ENCODE measurements at regions of chr17 and their contacts with region 1.

Region 1: GRCh38 chr17:28726226-28727130 is at the start of gene TLCD1:
- DNase-seq: peak; percentile 96
- H3K4me3 Mint-ChIP-seq: peak within 1 kb of the TSS; percentile 93
- H3K27ac Mint-ChIP-seq: peak within 1 kb of the TSS; percentile 98
- H3K4me1 Mint-ChIP-seq: peaks cover 47% of the 10 kb centered on the region
- H3K27me3 Mint-ChIP-seq: no peaks in the 10 kb centered on the region
- total RNA-seq, gene TLCD1: 9.1 to 9.5 TPM

Region 2: DNA sequence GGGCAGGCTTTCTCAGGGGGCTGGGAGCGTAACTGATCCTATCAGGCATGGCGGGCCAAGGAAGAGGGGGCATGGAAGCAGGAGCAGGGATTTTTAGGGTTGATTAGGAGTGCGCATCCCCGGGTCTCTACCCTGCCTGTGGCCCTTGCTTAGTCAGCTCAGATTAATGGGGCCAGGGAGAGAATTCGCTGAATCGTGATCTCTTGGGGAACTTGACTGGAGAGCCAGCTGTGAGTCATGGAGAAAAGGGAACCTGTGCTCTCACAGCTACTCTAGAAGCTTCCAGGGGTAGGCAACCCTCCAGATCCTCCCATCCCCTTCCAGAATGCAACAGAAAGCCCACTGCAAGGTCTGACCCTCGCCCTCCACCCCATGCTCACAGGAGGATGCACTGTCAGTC is 216.7 kb before region 1 on chr17:
- CTCF ChIA-PET with region 1: no interaction called
- POLR2A ChIA-PET with region 1: no interaction called
- intact Hi-C with region 1: no loop called
- DNase-seq: no peak
- H3K4me3 Mint-ChIP-seq: no peak overlapping the region
- H3K27ac Mint-ChIP-seq: no peak overlapping the region
- H3K4me1 Mint-ChIP-seq: no peaks in the 10 kb centered on the region
- H3K27me3 Mint-ChIP-seq: peaks cover 33% of the 10 kb centered on the region

Region 3: DNA sequence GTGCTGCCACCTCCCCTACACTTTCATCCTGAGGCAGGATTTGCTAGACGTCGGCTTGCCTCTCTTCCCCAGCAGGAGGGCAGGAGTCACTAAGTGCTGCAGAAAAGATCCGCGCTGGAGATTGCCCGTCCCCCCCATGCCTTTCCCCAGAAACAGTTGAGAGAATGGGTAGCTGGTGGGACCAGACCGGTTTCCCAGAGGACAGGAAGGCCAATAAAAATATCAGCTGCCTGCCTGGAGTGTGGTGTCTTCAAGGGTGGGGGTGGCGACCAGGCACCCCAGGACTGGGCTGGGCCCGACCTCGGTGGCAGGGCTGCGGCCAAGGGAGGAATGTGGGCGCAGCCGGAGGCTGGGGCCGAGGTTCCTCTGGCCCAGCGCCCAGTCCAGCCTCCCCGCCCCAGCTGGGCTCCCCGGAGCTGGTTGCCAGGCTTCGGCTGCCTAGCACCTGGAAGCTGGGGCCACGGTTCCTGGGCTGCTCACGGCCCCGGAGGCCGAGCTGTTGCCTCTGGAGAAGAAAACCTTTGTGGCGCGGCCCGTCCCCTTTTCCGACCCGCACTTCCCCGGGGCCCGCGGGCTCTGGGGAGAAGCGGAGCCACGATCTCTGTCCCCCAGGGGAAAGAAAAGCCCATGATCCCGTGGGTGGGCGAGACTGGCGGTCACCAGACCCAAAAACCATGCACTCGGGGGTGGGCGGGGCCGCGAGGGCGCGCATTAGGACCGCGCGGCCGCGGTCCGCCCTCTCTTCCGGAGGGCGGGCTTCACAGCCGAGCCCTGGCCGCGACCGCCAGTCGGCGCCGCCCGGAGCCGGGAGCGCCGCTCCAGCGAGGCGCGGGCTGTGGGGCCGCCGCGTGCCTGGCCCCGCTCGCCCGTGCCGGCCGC is 17.0 kb after region 1 on chr17 and contains the start of gene TRAF4:
- CTCF ChIA-PET with region 1: interaction called, 632 read pairs
- POLR2A ChIA-PET with region 1: interaction called, 202 read pairs
- intact Hi-C with region 1: loop called (anchors 1 kb)
- DNase-seq: peak; percentile 83
- H3K4me3 Mint-ChIP-seq: peak within 1 kb of the TSS; percentile 90
- H3K27ac Mint-ChIP-seq: peak within 1 kb of the TSS; percentile 89
- H3K4me1 Mint-ChIP-seq: peaks cover 32% of the 10 kb centered on the region
- H3K27me3 Mint-ChIP-seq: no peaks in the 10 kb centered on the region
- total RNA-seq, gene TRAF4: 83.0 to 83.9 TPM

Region 4: GRCh38 chr17:28812091-28812747 is 85.7 kb after region 1 on chr17:
- CTCF ChIA-PET with region 1: interaction called, 20 read pairs
- POLR2A ChIA-PET with region 1: no interaction called
- intact Hi-C with region 1: loop called (anchors 1 kb)
- DNase-seq: peak; percentile 98
- H3K4me3 Mint-ChIP-seq: peak overlapping the region; percentile 82
- H3K27ac Mint-ChIP-seq: peak overlapping the region; percentile 92
- H3K4me1 Mint-ChIP-seq: peaks cover 43% of the 10 kb centered on the region
- H3K27me3 Mint-ChIP-seq: no peaks in the 10 kb centered on the region

Region 5: DNA sequence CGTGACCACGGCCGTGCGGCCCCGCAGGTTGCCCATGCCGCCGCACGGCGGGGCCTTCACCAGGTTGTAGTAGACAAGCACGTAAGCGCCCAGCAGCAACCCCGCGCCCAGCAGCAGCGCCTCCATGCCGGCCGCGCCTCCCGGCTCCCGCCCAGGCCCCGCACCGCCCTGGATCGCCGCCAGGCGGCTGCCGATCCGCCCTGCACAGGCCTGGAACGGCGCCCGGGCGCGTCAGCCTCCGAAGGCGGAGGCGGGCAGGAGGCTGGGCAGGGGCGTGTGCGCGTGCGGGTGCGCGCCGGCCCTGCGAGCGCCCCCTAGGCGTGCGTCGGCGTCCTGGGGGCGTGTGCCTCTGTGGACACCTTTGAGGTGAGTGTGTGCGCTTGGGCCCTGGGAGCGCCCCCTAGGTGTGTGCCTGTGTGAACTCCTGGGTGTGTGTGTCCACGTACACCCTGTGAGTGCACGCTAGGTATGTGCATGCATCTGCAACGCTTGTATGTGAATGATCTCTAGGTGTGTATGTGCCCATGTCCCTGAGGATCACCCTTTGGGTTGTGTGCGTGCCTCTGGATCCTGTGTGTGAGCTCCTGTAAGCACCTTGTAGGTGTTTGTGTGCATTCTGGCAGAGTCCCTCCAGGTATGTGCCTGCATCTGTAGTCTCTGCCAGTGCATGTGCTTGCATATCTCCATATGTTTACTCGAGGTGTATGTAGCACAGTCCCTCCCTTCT is 176.5 kb after region 1 on chr17 and contains the start of gene DHRS13:
- CTCF ChIA-PET with region 1: interaction called, 38 read pairs
- POLR2A ChIA-PET with region 1: interaction called, 7 read pairs
- intact Hi-C with region 1: loop called (anchors 1 kb)
- DNase-seq: peak; percentile 94
- H3K4me3 Mint-ChIP-seq: peak within 1 kb of the TSS; percentile 97
- H3K27ac Mint-ChIP-seq: peak within 1 kb of the TSS; percentile 89
- H3K4me1 Mint-ChIP-seq: peaks cover 27% of the 10 kb centered on the region
- H3K27me3 Mint-ChIP-seq: no peaks in the 10 kb centered on the region
- total RNA-seq, gene DHRS13: 18.0 to 20.6 TPM

Region 6: GRCh38 chr17:28925912-28926365 is 199.5 kb after region 1 on chr17:
- CTCF ChIA-PET with region 1: interaction called, 17 read pairs
- POLR2A ChIA-PET with region 1: interaction called, 3 read pairs
- intact Hi-C with region 1: no loop called
- DNase-seq: peak; percentile 53
- H3K4me3 Mint-ChIP-seq: peak overlapping the region; percentile 50
- H3K27ac Mint-ChIP-seq: peak overlapping the region; percentile 87
- H3K4me1 Mint-ChIP-seq: peaks cover 59% of the 10 kb centered on the region
- H3K27me3 Mint-ChIP-seq: no peaks in the 10 kb centered on the region

Region 7: DNA sequence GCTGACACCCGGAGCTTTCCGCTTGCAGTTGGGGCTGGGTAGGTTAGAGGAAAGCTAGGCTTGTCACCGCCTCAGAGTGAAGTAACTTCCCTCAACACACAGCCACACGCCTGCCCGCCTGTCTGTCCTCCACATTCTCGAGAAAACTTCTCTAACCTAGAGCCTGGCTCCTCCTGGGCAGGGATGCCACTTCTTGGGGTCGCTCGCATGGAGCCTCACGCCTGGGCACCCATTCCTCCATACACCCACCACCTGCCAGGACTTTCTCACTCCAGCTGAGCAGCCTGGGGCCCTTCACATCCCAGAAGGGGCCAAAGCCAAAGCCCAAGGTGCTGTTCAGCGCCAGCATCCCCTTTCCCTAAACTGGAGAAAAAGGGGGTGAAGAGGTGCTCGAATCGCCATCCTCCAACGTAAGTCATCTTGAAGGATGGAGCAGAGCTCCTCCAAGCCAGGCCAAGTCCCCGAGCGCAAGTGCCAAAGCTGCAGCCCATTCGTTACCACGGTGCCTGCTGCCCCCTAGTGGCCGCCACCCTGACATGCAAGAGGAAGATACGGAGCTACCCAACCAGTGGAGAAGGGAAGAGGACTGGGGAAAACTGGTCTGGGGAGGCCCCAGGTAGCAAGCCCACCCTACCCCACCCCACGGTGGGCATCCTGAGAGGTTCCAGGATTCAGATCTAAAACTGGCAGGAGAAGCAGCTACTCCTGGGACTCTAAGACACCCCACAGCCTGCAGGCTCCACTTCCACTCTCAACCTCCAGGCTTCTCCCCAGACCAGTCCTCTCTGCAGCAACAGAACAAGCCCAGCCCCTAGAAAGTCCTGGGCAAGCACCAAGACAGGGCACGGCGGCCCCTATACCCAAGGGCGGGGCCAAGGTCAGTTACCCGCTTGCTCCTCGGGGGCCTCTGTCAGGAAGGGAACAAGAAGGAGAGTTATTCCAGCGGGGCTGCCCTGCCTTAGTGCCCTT is 390.6 kb after region 1 on chr17:
- CTCF ChIA-PET with region 1: interaction called, 30 read pairs
- POLR2A ChIA-PET with region 1: interaction called, 7 read pairs
- intact Hi-C with region 1: loop called (anchors 5 kb)
- DNase-seq: peak; percentile 87
- H3K4me3 Mint-ChIP-seq: no peak overlapping the region
- H3K27ac Mint-ChIP-seq: no peak overlapping the region
- H3K4me1 Mint-ChIP-seq: peaks cover 4% of the 10 kb centered on the region
- H3K27me3 Mint-ChIP-seq: no peaks in the 10 kb centered on the region

Measured in activated CD4-positive, alpha-beta memory T cell treated with anti-CD3 and anti-CD28 coated beads for 36 hours (primary cell).